Activated CD8-positive, alpha-beta memory T cell treated with anti-CD3 and anti-CD28 coated beads, Interleukin-2, amount 10 ng/mL, durations not matched to agents 7 days and 5 days (primary cell): ENCODE measurements at regions of chr1 and their contacts with region 1.

Region 1: GRCh38 chr1:116881879-116882520 is 27.7 kb upstream of the PTGFRN start:
- DNase-seq: peak; percentile 66
- ATAC-seq: peak; percentile 76
- H3K4me3 Mint-ChIP-seq: no peak overlapping the region
- H3K27ac Mint-ChIP-seq: no peak overlapping the region
- H3K4me1 Mint-ChIP-seq: peaks cover 7% of the 10 kb centered on the region
- H3K27me3 Mint-ChIP-seq: no peaks in the 10 kb centered on the region

Region 2: GRCh38 chr1:116724765-116725375 is 157.1 kb before region 1 on chr1:
- CTCF ChIA-PET with region 1: interaction called, 19 read pairs
- DNase-seq: peak; percentile 86
- ATAC-seq: peak; percentile 83
- H3K4me3 Mint-ChIP-seq: no peak overlapping the region
- H3K27ac Mint-ChIP-seq: no peak overlapping the region
- H3K4me1 Mint-ChIP-seq: peaks cover 25% of the 10 kb centered on the region
- H3K27me3 Mint-ChIP-seq: no peaks in the 10 kb centered on the region

Region 3: GRCh38 chr1:116826818-116827606 is 55.0 kb before region 1 on chr1:
- CTCF ChIA-PET with region 1: interaction called, 11 read pairs
- DNase-seq: peak; percentile 87
- ATAC-seq: peak; percentile 90
- H3K4me3 Mint-ChIP-seq: peak overlapping the region; percentile 66
- H3K27ac Mint-ChIP-seq: peak overlapping the region; percentile 96
- H3K4me1 Mint-ChIP-seq: peaks cover 54% of the 10 kb centered on the region
- H3K27me3 Mint-ChIP-seq: no peaks in the 10 kb centered on the region

Region 4: DNA sequence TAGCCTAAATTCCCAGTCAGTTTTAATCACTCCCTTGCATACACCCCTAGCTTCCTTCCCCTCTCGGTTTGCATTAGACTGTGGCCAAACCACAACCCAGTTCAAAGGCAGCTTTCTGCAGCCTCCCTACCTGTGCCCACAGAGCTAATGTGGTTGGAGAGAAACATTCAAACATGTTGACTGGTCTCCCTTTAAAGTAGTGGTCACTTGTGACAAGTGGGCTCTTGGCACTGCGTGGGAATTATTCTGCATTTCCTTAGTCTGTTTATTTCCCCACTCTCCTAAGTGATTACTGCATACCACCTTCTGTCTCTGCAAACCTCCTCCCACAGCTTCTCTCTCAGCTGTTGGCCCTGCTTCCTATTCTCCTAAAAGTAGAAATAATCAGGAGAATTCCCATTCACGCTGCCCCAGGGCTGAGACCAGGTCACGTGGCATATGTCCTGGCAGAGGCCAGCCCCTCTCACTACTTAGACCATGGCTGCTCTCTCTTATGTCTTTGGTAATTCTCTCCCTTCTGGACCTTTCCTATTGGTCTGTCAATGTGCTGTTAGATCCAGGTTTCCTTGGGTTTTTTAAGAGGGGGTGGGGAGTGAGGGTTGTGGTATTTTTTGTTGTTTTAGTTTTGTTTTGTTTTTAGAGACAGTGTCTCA is 81.1 kb after region 1 on chr1:
- CTCF ChIA-PET with region 1: no interaction called
- DNase-seq: no peak
- ATAC-seq: no peak
- H3K4me3 Mint-ChIP-seq: no peak overlapping the region
- H3K27ac Mint-ChIP-seq: no peak overlapping the region
- H3K4me1 Mint-ChIP-seq: no peaks in the 10 kb centered on the region
- H3K27me3 Mint-ChIP-seq: peaks cover 4% of the 10 kb centered on the region

Region 5: DNA sequence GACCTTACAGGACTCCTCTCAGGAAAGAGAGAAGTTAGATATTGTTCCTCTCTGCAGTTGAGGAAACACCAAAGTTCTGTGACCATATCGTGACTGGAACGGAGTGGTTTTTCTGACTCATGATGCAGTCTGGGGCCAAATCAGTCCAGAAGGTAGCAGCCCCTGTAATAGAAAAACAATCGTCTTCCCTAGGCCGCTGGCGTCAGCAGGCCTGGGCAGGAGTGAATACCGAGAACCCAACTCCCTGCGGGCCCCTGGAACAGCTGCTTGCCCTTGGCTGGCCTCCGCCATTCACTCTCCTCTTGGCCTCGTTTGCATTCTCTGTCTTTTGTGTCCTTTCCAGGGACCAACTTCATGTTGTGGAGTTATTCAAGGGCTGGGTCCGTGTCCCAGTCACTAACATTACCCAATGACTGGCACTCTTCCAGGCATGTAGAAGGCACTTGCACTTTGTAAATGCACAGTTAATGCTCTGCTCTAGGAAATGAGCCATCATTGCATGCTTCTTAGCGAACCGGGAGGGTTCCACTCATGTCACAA is 108.7 kb after region 1 on chr1:
- CTCF ChIA-PET with region 1: no interaction called
- DNase-seq: no peak
- ATAC-seq: no peak
- H3K4me3 Mint-ChIP-seq: no peak overlapping the region
- H3K27ac Mint-ChIP-seq: no peak overlapping the region
- H3K4me1 Mint-ChIP-seq: peaks cover 22% of the 10 kb centered on the region
- H3K27me3 Mint-ChIP-seq: no peaks in the 10 kb centered on the region